ENCODE measurements at regions of chr10 and their contacts with region 1.

Region 1: DNA sequence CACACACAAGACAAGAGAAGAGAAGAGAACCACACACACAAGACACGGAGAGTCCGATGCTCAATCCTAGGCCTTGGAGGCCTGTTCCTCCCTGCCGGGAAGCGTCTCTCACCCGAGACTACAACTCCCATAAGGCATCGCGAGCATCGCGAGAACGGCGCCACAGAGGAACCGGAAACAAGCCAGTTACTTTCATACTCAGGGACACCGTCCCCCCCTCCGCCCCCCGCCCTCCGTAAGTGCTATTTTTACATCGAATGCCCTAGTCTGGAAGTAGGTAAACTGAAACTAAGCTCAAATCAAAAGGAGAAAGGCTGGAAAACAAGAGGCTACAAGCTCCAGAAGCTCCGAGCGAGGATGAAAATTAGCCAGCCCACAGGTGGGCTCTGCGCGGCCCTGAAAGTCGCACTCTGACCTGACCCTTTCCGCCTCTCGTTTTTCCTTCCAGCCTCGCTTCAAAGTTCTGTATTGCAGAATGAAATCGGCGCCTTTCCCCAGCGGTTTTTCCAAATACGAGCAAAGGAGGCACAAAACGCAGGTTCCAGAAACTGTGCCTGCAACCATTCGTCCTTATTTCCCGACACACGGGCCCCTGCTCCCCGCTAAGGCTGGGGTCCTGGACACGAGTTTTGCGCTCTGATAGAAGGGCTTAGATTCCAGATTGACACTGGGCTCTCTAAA is 11.5 kb upstream of the DNAJC12 start:
- DNase-seq: peak; percentile 89 to 99 (median 97)

Region 2: DNA sequence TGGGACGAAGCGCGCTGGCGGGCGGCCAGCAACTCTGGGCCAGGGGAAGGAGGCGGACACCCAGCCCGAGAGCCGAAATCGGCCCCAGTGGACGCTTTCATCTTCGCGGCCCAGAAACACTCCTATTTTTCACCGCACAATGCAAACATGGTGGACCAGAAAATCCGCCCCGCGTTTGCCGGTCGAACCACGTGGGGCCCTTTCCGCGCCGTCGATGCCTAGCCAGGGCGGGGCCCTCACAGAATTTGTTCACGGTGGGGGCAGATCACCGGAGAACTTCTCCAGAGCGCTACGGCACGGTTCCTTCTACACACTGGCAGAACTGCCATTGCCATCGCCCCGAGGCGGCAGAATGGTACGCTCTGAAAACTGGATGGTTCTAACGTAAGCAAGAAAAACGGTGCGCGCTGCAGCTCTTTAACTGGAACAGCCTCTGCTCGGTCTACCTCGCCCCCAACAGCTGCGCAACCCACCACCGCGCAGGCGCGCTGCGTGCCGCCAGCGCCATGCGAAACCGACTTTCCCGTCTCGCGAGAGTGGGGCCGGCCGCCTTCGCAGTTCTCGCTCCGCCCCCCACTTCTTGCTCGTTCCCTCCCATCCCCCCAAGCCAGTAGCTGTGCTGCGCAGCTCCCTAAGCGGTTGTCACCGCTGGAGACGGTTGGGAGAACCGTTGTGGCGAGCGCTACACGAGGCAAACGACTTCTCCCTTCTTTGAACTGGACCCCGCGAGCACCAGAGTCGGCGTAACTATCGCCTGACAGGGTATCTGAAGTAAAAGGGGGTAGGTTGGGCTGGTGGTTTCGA is 482.2 kb after region 1 on chr10 and contains the start of gene HNRNPH3:
- intact Hi-C with region 1: loop called (anchors 10 kb)
- DNase-seq: peak; percentile 94 to 99 (median 98)

Region 3: GRCh38 chr10:68434657-68435056 is 585.2 kb after region 1 on chr10:
- intact Hi-C with region 1: no loop called
- DNase-seq: no peak

Region 4: GRCh38 chr10:68526626-68527307 is 677.3 kb after region 1 on chr10:
- intact Hi-C with region 1: loop called (anchors 10 kb)
- DNase-seq: peak in 1 of 42 donors; percentile 11

Measured in head of caudate nucleus (tissue), 42 donors.